A673 (cell line): ENCODE measurements at regions of chr19 and their contacts with region 1.

Region 1: DNA sequence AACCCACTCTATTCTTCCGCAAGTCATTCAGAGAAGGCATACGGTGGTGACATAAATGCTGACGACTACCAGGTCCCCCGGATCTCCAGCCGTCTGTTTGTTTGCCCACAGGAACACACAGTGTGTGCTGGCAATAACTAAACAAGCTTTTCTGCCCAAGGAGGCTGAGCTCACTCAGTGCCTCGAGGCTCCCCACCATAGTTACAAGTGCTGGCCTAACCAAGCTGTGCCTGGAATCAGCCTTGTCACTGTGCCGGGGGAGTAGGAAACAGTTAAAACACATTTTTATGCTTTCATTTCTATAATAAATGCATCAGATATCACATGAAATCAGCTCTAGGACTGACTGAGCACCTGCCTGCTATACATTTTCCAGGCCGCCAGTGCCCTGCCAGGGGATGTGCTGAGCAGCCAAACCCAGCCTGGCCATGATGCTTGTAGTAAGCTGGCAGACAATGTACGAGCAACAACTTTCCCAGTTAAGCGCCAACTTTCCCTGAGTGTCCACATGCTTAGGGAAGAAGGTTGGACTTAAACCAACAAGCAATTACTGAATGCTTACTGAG is 28.1 kb downstream of the BRD4 start:
- DNase-seq: no peak
- H3K4me3 ChIP-seq: no peak overlapping the region
- H3K27ac ChIP-seq: peak overlapping the region; percentile 41
- H3K4me1 ChIP-seq: peaks cover 37% of the 10 kb centered on the region
- H3K27me3 ChIP-seq: no peaks in the 10 kb centered on the region
- CTCF ChIP-seq: no peak

Region 2: GRCh38 chr19:15264061-15264932 is 39.9 kb before region 1 on chr19:
- CTCF ChIA-PET with region 1: no interaction called
- POLR2A ChIA-PET with region 1: interaction called, 16 read pairs
- intact Hi-C with region 1: no loop called
- DNase-seq: peak; percentile 80
- H3K4me3 ChIP-seq: no peak overlapping the region
- H3K27ac ChIP-seq: peak overlapping the region; percentile 23
- H3K4me1 ChIP-seq: no peaks in the 10 kb centered on the region
- H3K27me3 ChIP-seq: no peaks in the 10 kb centered on the region
- CTCF ChIP-seq: peak; percentile 93